ENCODE measurements at regions of chr4 and their contacts with region 1.

Region 1: DNA sequence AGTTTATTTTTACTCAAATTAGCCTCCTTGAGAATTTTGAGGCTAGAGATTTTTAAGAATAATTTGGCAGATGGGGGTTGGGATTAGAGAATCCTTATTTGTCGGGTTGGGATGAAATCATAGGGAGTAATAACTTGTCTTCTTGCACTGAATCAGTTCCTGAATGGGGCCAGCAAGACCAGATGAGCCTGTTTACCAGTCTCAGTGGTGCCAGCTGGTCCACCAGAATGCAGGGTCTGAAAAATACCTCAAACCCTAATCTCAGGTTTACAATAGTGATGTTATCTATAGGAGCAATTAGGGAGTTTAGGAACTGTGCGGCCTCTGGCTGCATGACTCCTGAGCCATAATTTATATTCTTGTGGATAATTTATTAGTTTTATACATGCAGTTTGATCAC is 705.9 kb upstream of the AGA start:
- DNase-seq: no peak
- H3K4me3 ChIP-seq: no peak overlapping the region
- H3K27ac ChIP-seq: no peak overlapping the region
- H3K4me1 ChIP-seq: no peaks in the 10 kb centered on the region
- H3K27me3 ChIP-seq: no peaks in the 10 kb centered on the region
- CTCF ChIP-seq: no peak
- POLR2A ChIP-seq: no peak

Region 2: DNA sequence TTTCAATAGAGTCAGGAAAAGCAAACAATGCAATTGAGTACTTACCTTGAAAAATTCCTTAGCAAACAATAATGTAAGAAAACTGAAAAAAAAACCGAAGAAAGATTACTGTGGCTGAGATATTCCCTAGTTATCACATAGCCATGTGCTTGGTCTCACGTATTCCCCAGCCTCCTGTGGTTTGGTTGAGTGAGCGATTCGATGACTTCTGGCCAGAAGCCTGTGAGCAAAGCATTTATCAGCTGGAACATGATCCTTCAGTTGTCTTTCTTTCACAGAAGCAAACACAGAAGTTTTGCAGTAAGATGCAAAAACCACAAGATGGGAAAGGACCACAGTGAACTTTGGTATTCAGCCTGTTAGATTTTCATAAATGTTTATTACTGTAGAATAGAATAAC is 1048.4 kb after region 1 on chr4:
- intact Hi-C with region 1: loop called (anchors 5 kb)
- DNase-seq: no peak
- H3K4me3 ChIP-seq: no peak overlapping the region
- H3K27ac ChIP-seq: no peak overlapping the region
- H3K4me1 ChIP-seq: no peaks in the 10 kb centered on the region
- H3K27me3 ChIP-seq: no peaks in the 10 kb centered on the region
- CTCF ChIP-seq: no peak
- POLR2A ChIP-seq: no peak